Activated naive CD4-positive, alpha-beta T cell treated with anti-CD3 and anti-CD28 coated beads for 36 hours (primary cell): ENCODE measurements at regions of chr1 and their contacts with region 1.

Region 1: GRCh38 chr1:116556289-116557006 is 14.4 kb downstream of the CD58 start:
- DNase-seq: peak; percentile 82
- H3K4me3 Mint-ChIP-seq: no peak overlapping the region
- H3K27ac Mint-ChIP-seq: peak overlapping the region; percentile 78
- H3K4me1 Mint-ChIP-seq: peaks cover 56% of the 10 kb centered on the region
- H3K27me3 Mint-ChIP-seq: no peaks in the 10 kb centered on the region

Region 2: GRCh38 chr1:116544588-116545358 is 11.7 kb before region 1 on chr1:
- CTCF ChIA-PET with region 1: no interaction called
- intact Hi-C with region 1: loop called (anchors 1 kb)
- DNase-seq: peak; percentile 27
- H3K4me3 Mint-ChIP-seq: peak overlapping the region; percentile 60
- H3K27ac Mint-ChIP-seq: peak overlapping the region; percentile 84
- H3K4me1 Mint-ChIP-seq: peaks cover 27% of the 10 kb centered on the region
- H3K27me3 Mint-ChIP-seq: no peaks in the 10 kb centered on the region